Prostate gland (tissue), 2 donors: ENCODE measurements at regions of chr3 and their contacts with region 1.

Region 1: DNA sequence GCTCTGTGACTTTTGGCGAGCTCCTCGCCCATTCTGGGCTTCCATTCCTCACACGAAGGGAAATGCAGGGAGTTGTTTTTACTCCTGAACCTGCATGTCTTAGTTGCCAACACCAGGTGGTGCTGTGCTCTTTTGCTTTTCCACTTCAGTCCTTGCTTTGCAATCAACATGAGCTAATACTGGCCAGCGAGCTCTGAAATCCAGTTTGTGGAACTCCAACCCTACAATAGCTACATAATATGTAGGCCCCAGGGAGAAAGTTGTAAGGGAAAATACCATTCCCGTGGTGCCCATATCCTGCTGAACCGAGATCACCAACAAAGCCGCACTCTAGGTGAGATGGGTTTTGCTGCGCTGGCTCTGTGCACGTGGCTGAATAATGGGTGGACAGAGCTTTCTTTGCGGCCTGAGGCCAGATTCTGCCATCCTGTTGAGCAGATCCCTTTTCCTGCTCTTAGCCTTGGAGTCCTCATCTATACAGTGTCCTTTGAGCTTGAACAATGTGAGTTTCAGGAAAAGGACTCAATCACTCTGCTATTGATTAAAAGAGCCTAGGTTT is 25.0 kb downstream of the LSM3 start:
- DNase-seq: peak; percentile 69
- H3K4me3 ChIP-seq: no peak overlapping the region
- H3K27ac ChIP-seq: no peak overlapping the region
- H3K4me1 ChIP-seq: peaks cover 6% of the 10 kb centered on the region
- H3K27me3 ChIP-seq: no peaks in the 10 kb centered on the region
- CTCF ChIP-seq: peak; percentile 83 to 93 (median 90)
- POLR2A ChIP-seq: no peak

Region 2: DNA sequence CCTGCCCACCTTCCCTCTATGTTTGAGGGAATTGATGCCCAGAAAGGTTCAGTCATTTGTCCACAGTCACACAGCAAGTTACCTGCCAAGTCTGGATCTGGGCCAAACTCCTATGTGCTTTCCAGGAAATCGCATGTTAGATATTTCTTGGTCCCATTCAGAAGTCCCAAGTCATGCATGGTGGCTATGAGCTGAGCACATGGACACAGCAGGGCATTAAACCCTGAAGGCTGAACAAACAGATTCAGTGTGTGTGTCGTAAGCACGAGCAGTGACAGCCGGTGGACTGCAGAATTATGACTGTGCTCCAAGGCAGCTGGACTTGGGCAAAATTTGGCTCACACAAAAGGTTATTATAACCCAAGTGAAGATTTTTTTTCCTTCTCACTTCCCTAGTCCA is 187.4 kb after region 1 on chr3:
- intact Hi-C with region 1: no loop called
- DNase-seq: no peak
- H3K4me3 ChIP-seq: no peak overlapping the region
- H3K27ac ChIP-seq: no peak overlapping the region
- H3K4me1 ChIP-seq: no peaks in the 10 kb centered on the region
- H3K27me3 ChIP-seq: no peaks in the 10 kb centered on the region
- CTCF ChIP-seq: no peak
- POLR2A ChIP-seq: no peak

Region 3: GRCh38 chr3:14467814-14468620 is 264.4 kb after region 1 on chr3:
- intact Hi-C with region 1: loop called (anchors 2 kb)
- DNase-seq: peak; percentile 23
- H3K4me3 ChIP-seq: no peak overlapping the region
- H3K27ac ChIP-seq: no peak overlapping the region
- H3K4me1 ChIP-seq: no peaks in the 10 kb centered on the region
- H3K27me3 ChIP-seq: no peaks in the 10 kb centered on the region
- CTCF ChIP-seq: peak; percentile 84 to 96 (median 94)
- POLR2A ChIP-seq: no peak